ENCODE measurements at regions of chr5 and their contacts with region 1.

Region 1: DNA sequence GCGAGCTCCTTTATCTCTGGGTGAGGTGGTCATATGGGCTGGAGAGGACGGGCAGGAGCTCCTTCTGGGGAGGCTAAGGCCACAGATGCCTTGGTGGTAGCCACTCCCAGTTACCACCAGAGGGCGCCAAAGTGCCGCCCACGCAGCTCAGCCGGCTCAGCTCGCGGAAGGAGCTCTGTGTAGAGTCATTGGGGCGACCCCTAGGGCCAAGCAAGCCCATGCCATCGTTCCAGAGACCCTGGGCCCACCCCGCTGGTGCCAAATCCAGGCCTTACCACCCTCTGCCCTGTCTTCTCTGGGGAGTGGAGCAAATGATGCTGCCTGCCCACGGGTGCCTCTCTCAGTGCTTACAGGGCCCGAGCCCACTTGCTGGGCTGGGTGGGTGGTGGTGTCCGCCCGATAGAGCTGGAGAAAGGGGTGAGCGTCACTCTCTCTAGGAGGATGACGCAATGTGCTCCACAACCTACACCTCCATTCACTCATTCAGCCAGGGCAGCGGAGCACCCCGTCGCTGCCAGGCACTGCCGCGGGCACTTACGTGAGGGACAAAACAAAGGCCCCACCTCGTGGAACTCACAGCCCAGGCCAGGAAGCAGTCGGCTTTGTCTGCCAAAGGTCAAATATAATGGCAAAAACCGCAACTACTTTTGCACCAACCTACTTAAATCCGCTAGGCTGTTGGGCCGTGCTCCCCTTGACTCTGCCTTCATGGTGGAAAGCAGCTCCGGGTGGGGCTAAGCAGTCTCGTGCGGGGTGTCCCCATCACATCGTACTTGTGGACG is 13.8 kb downstream of the TSPAN17 start:
- DNase-seq: peak; percentile 89
- ATAC-seq: peak; percentile 83
- H3K4me3 Mint-ChIP-seq: no peak overlapping the region
- H3K27ac Mint-ChIP-seq: no peak overlapping the region
- H3K4me1 Mint-ChIP-seq: peaks cover 11% of the 10 kb centered on the region
- H3K27me3 Mint-ChIP-seq: no peaks in the 10 kb centered on the region
- CTCF ChIP-seq: peak; percentile 98

Region 2: GRCh38 chr5:176388444-176389134 is 272.5 kb before region 1 on chr5 and contains the starts of genes HIGD2A and NOP16:
- CTCF ChIA-PET with region 1: no interaction called
- POLR2A ChIA-PET with region 1: no interaction called
- DNase-seq: peak; percentile 99
- ATAC-seq: peak; percentile 92
- H3K4me3 Mint-ChIP-seq: peak within 1 kb of the TSS; percentile 99
- H3K27ac Mint-ChIP-seq: peak within 1 kb of the TSS; percentile 100
- H3K4me1 Mint-ChIP-seq: peaks cover 19% of the 10 kb centered on the region
- H3K27me3 Mint-ChIP-seq: no peaks in the 10 kb centered on the region; the same call in 1 of the 2 replicates
- CTCF ChIP-seq: no peak
- total RNA-seq, gene HIGD2A: 98.2 to 112 TPM (median 108 TPM) in 3 replicates
- total RNA-seq, gene NOP16: 51.7 to 57.7 TPM (median 52.1 TPM) in 3 replicates

Region 3: GRCh38 chr5:176629853-176630712 is 31.0 kb before region 1 on chr5 and contains the starts of genes EIF4E1B and SNCB:
- CTCF ChIA-PET with region 1: interaction called, 22 read pairs
- POLR2A ChIA-PET with region 1: no interaction called
- DNase-seq: peak; percentile 72
- ATAC-seq: peak; percentile 63
- H3K4me3 Mint-ChIP-seq: peak within 1 kb of the TSS; percentile 76
- H3K27ac Mint-ChIP-seq: no peak within 1 kb of the TSS
- H3K4me1 Mint-ChIP-seq: peaks cover 39% of the 10 kb centered on the region
- H3K27me3 Mint-ChIP-seq: peaks cover 54% of the 10 kb centered on the region
- CTCF ChIP-seq: no peak
- total RNA-seq, gene EIF4E1B: 0.74 to 1.3 TPM (median 1.1 TPM) in 3 replicates
- total RNA-seq, gene SNCB: 6.8 to 13.4 TPM (median 9.6 TPM) in 3 replicates

Region 4: DNA sequence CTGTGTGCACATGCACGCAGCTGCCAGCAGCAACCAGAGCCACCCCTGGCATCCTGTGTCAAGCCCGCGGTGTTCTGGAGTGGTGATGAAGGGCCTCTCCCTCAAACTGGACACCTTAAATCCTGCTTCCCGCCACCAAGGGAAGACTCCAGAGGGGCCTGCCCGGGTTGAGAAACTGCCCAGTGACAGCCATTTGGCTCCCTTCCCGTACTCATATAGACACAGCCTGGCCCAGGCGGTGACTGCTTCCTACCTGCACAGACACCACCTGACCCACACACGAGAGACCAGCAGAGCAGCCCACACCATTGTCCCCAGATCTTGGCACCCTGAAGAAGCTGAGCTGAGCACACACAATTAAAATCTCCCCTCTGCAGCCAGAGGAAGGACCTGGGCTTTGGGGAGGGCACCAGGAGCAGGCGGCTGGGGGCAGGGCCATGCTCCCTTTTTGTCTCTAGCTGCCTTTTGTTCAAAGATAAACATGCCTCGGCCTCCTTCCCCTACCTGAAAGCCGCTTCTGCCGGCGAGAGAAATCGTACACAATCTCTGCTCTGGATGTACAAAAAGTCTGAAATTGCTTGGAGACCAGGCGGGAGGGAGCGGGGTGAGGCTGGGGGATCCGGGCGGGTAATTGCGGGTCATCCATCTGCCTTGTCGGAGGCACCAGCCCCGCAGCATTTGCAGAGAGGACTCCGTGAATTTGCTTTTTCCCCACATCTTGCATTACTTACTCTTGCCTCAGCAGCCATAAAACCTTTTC is 64.7 kb after region 1 on chr5:
- CTCF ChIA-PET with region 1: interaction called, 31 read pairs
- POLR2A ChIA-PET with region 1: no interaction called
- DNase-seq: no peak
- ATAC-seq: peak; percentile 29
- H3K4me3 Mint-ChIP-seq: no peak overlapping the region
- H3K27ac Mint-ChIP-seq: no peak overlapping the region
- H3K4me1 Mint-ChIP-seq: peaks cover 30% of the 10 kb centered on the region
- H3K27me3 Mint-ChIP-seq: peaks cover 3% of the 10 kb centered on the region; the same call in 1 of the 2 replicates
- CTCF ChIP-seq: no peak

Region 5: DNA sequence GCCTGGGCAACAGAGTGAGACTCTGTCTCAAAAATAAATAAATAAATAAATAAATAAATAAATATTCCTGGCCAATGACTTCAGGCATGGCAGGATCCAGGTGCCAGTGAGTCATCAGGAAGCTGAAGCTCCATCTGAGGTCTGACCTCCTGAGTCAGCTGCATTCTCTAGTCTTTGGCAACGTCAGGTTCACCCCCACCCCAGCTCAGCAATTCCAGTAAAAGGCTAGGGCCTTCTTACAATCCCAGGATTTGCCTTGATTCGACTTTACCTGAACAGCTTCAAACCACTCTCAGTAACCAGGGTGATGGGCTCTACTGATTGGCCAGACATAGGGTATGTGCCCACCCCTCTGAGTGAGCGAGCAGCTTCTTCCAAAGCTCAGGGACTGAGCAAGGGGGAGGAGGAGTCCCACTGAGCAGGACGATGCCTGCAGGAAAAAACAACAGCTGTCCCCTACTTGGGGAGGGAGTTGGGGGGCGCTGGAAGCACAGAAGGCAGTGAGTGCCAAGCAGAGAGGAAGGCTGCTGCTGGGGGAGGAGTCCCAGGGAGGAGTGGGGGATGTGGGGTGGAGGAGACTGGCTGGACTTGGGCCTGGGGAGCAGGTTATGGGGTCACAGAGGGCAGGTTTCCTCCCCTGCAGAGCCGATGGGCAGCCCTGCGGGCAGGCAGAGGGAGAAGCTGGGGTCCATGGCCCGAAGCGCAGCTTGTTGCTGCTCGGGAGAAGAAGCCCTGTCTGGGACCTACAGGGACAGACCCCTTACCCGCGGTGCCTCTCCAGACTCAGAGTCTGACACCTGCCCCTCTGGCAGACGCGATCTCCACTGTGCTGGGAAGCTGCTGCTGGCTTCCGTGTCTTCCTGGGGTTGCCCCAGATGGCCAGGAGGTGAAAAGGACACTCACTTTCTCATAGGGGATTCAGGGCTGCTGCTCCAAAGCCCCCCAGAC is 123.4 kb after region 1 on chr5:
- CTCF ChIA-PET with region 1: interaction called, 22 read pairs
- POLR2A ChIA-PET with region 1: no interaction called
- DNase-seq: no peak
- ATAC-seq: peak; percentile 82
- H3K4me3 Mint-ChIP-seq: peak overlapping the region; percentile 8; the same call in 1 of the 2 replicates
- H3K27ac Mint-ChIP-seq: no peak overlapping the region; the same call in 1 of the 2 replicates
- H3K4me1 Mint-ChIP-seq: peaks cover 29% of the 10 kb centered on the region
- H3K27me3 Mint-ChIP-seq: peaks cover 5% of the 10 kb centered on the region; the same call in 1 of the 2 replicates
- CTCF ChIP-seq: no peak

Region 6: DNA sequence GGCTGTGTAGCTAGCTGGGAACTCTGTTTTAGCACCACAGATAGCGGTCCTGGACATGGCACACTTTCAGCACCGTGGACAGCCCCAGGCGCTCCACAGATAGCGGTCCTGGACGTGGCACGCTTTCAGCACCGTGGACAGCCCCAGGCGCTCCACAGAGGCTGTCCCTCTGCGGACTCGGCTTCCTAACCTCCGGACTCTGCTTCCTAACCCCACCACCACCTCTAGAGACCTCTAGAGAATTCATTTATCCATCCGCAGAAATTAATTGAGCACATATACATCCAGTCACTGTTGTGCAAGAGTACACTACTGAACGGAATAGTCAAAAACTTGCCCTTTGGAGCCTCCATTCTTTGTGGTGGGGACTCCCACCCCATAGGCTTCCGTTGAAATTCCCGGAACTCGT is 176.7 kb after region 1 on chr5:
- CTCF ChIA-PET with region 1: interaction called, 13 read pairs
- POLR2A ChIA-PET with region 1: no interaction called
- DNase-seq: peak; percentile 97
- ATAC-seq: peak; percentile 98
- H3K4me3 Mint-ChIP-seq: no peak overlapping the region
- H3K27ac Mint-ChIP-seq: no peak overlapping the region
- H3K4me1 Mint-ChIP-seq: peaks cover 8% of the 10 kb centered on the region
- H3K27me3 Mint-ChIP-seq: peaks cover 31% of the 10 kb centered on the region
- CTCF ChIP-seq: no peak

Region 7: GRCh38 chr5:176891331-176891958 is 230.4 kb after region 1 on chr5:
- CTCF ChIA-PET with region 1: interaction called, 13 read pairs
- POLR2A ChIA-PET with region 1: no interaction called
- DNase-seq: no peak
- ATAC-seq: no peak
- H3K4me3 Mint-ChIP-seq: no peak overlapping the region
- H3K27ac Mint-ChIP-seq: no peak overlapping the region
- H3K4me1 Mint-ChIP-seq: no peaks in the 10 kb centered on the region
- H3K27me3 Mint-ChIP-seq: no peaks in the 10 kb centered on the region; the same call in 1 of the 2 replicates
- CTCF ChIP-seq: no peak

Region 8: DNA sequence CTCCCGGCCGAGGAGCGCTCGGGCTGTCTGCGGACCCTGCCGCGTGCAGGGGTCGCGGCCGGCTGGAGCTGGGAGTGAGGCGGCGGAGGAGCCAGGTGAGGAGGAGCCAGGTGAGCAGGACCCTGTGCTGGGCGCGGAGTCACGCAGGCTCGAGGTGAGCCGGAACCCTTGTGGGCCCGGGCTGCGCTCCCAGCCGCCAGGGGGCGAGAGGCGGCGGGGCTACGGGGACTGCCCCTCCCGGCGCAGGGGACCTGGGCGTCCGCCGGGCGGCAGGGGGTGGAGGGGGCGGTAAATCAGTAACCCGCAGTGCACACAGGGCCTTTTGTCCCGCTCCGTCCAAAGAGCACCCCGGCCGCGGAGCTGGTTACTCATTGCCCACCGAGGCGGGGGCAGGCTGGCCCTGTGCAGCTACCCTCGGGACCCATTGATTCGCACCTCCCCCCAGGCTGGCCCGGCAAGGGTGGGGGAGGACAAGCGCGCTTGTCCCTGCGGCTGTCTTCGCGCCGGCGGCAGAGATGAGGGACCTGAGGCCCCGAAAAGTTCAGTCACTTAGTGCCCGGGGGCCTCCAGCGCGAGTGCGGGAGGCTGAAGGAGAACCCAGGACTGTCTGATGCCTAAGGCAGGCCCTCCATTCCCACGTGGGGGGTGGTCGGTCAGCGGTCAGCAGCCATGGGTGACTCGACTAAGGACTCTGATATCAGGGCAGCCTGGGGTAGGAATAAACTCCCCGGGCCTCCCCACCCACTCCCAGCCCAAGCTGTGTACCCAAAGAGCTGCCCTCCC is 426.1 kb after region 1 on chr5:
- CTCF ChIA-PET with region 1: interaction called, 26 read pairs
- POLR2A ChIA-PET with region 1: no interaction called
- DNase-seq: peak; percentile 81
- ATAC-seq: peak; percentile 69
- H3K4me3 Mint-ChIP-seq: peak overlapping the region; percentile 80
- H3K27ac Mint-ChIP-seq: no peak overlapping the region
- H3K4me1 Mint-ChIP-seq: peaks cover 37% of the 10 kb centered on the region
- H3K27me3 Mint-ChIP-seq: no peaks in the 10 kb centered on the region; the same call in 1 of the 2 replicates
- CTCF ChIP-seq: peak; percentile 68; the same call in 1 of the 2 replicates